HepG2 (cell line): ENCODE measurements at regions of chr1 and their contacts with region 1.

Region 1: DNA sequence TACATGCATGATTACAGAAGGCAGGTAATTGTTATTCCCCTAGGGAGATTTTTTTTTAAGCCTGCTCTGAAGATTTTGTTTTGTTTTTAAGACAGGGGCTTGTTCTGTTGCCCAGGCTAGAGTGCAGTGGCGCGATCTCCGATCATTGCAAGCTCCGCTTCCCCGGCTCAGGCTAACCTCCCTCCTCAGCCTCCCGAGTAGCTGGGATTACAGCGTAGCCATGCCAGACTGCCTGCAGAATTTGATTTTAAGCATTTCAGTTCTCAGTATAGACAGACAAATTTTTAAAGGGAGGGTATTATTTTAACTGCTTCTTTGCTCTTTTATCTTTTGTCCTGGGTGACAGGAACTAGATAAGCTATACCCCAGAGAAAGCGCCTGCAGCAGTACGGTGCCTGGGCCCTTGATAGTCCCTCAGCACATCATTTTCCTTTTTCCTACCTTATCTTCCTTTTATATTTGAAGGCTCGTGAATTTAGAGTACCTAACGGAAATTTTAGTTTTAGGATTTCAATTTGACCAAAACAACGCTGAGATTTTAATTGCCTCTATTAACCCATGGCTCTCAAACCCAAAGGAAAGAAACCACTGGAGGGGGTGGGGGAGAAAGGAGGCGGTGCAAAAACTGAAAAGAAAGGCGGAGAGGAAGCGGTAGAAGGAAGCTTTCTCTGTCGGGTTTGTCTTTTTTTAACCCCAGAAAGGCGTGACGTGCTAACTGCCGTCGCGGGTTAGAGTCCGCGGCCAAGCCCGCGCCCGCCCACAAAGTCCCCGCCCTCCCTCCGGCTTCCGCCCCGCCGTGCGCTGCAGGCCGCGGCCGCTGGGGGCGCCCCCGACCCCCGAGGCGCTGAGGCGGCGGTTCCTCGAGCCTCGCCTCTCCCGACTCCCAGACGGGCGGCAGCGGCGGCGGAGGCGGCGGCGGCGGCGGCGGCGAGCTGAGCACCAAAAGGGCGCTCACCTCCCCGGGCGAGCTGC is at the start of gene EEIG2:
- DNase-seq: peak; percentile 48
- ATAC-seq: peak; percentile 89
- H3K4me3 ChIP-seq: peak within 1 kb of the TSS; percentile 54 to 77 (median 65)
- H3K27ac ChIP-seq: no peak within 1 kb of the TSS
- H3K4me1 ChIP-seq: peaks cover 21% of the 10 kb centered on the region
- H3K27me3 ChIP-seq: peaks cover 0 to 3% of the 10 kb centered on the region in 2 experiments; a peak in 1 of 5 replicates
- CTCF ChIP-seq: peak; percentile 69
- EP300 ChIP-seq: no peak
- POLR2A ChIP-seq: no peak
- RAD21 ChIP-seq: no peak
- total RNA-seq, gene EEIG2: 3.2 and 5.7 TPM in 2 replicates

Region 2: GRCh38 chr1:108502624-108503023 is 56.9 kb before region 1 on chr1:
- CTCF ChIA-PET with region 1: no interaction called
- POLR2A ChIA-PET with region 1: no interaction called
- in situ Hi-C with region 1: no loop called
- intact Hi-C with region 1: no loop called
- DNase-seq: no peak
- ATAC-seq: no peak
- H3K4me3 ChIP-seq: no peak overlapping the region
- H3K27ac ChIP-seq: no peak overlapping the region
- H3K4me1 ChIP-seq: 0 out of 2 replicates have a peak, but pooled peaks cover 5% of the 10 kb centered on the region
- H3K27me3 ChIP-seq: no peaks in the 10 kb centered on the region
- CTCF ChIP-seq: no peak
- EP300 ChIP-seq: no peak
- POLR2A ChIP-seq: no peak
- RAD21 ChIP-seq: no peak

Region 3: GRCh38 chr1:108643492-108644335 is 84.2 kb after region 1 on chr1:
- CTCF ChIA-PET with region 1: no interaction called
- POLR2A ChIA-PET with region 1: interaction called, 3 read pairs
- in situ Hi-C with region 1: no loop called
- intact Hi-C with region 1: loop called (anchors 1 kb)
- DNase-seq: peak; percentile 37
- ATAC-seq: peak; percentile 52; the same call in 2 of the 3 replicates
- H3K4me3 ChIP-seq: no peak overlapping the region
- H3K27ac ChIP-seq: no peak overlapping the region
- H3K4me1 ChIP-seq: peaks cover 34% of the 10 kb centered on the region
- H3K27me3 ChIP-seq: no peaks in the 10 kb centered on the region
- CTCF ChIP-seq: peak; percentile 66
- EP300 ChIP-seq: no peak
- POLR2A ChIP-seq: no peak
- RAD21 ChIP-seq: no peak